ENCODE measurements at regions of chr6 and their contacts with region 1.

Region 1: DNA sequence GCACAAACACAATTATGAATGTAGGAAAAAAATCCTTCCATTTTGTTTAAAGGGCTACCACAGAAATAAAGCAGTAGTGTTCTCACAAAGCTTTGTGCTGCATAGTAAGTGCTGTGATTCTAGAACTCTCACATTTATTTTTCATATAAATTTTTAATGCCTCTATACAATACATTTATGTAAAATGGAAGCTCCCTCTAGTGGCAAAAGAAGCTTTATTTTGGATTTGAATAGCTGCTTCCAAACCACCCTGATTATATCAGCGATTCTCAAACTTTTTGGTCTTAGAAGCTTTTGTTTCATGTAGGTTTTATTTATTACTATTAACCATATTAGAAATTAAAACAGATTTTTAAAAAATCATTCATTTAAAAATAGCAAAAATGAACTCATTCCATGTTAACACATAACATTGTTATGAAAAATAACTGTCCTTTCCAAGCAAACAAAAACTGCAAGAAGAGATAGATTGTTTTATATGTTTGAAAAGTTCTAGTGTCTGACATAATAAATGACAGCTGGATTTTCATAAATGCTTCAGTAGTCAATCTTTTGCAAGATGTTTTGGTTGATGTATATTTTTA is 38.4 kb downstream of the HS3ST5 start:
- DNase-seq: no peak
- H3K4me3 ChIP-seq: no peak overlapping the region
- H3K27ac ChIP-seq: no peak overlapping the region
- H3K4me1 ChIP-seq: no peaks in the 10 kb centered on the region
- H3K27me3 ChIP-seq: peaks cover 0 to 1% (median 0%) of the 10 kb centered on the region in 4 experiments; a peak in 1 of 7 replicates
- CTCF ChIP-seq: peak in 1 of 3 experiments; percentile 18; a peak in 2 of 4 replicates
- EP300 ChIP-seq: no peak
- POLR2A ChIP-seq: no peak
- RAD21 ChIP-seq: peak; percentile 7 to 13; a peak in 1 of 4 replicates

Region 2: DNA sequence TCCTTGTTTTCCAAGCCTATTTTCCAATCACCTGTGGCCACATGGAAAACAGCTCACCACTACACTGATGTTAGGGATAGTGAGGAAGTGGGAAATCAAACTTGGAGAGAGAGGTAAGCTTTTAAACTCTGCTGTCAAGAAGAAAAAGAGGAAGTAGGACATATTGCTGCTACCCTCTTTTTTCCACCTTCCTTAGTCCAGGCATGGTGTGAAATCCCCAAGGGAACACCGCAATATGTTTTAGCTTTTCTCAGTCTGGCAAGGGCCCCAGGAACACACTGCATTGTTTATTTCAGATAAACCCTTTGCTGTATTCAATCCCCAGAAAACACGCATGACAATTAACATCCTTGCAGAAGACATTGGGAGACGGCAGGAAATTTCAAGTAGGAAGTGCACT is 22.9 kb before region 1 on chr6:
- CTCF ChIA-PET with region 1: interaction called, 15 read pairs
- POLR2A ChIA-PET with region 1: interaction called, 3 read pairs
- DNase-seq: no peak
- H3K4me3 ChIP-seq: peak overlapping the region in 1 of 4 experiments; percentile 34; a peak in 1 of 8 replicates
- H3K27ac ChIP-seq: no peak overlapping the region
- H3K4me1 ChIP-seq: peaks cover 0 to 27% (median 15%) of the 10 kb centered on the region in 4 experiments; a peak in 4 of 7 replicates
- H3K27me3 ChIP-seq: no peaks in the 10 kb centered on the region
- CTCF ChIP-seq: no peak
- EP300 ChIP-seq: no peak
- POLR2A ChIP-seq: no peak
- RAD21 ChIP-seq: no peak

Region 3: DNA sequence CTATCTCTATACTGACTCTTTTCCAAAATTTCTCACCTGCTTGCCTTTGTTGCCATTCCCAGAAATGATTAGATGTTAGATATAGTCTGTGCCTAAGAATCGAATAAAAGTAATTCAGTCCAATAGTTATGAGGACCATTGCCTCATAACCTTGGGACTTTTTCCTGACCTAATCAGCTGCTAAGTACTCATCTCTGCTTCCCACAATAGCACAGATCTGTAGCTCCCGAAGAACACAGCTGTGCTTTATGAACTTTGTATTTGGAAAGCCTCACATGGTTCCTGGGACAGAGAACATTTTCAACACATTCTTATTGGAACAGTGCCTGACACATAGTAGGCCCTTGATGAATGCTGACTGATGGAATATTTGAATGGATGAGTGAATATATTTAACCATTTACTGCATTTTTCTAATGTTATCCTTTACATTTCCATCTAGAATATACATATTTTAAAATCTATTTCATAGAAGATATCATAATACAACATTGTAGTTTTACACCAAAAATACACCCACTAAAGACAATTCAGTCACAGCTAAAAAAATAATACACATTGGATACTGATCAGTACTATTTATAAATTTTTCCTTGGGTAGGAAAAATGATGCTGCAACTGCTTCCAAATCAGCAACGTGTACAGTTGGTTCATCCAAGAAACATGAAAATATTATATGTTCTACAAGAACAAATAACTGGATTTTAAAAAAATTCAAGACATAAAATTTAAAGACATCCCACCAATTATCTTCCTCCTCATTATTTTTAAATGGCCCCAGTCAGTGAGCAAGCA is 15.5 kb before region 1 on chr6:
- CTCF ChIA-PET with region 1: interaction called, 37 read pairs
- POLR2A ChIA-PET with region 1: no interaction called
- DNase-seq: no peak
- H3K4me3 ChIP-seq: no peak overlapping the region
- H3K27ac ChIP-seq: no peak overlapping the region
- H3K4me1 ChIP-seq: 0 out of 7 replicates have a peak, but pooled peaks cover 0 to 3% (median 0%) of the 10 kb centered on the region in 4 experiments
- H3K27me3 ChIP-seq: no peaks in the 10 kb centered on the region
- CTCF ChIP-seq: no peak
- EP300 ChIP-seq: no peak
- POLR2A ChIP-seq: no peak
- RAD21 ChIP-seq: no peak

Region 4: GRCh38 chr6:114354482-114354881 is 50.1 kb after region 1 on chr6:
- CTCF ChIA-PET with region 1: no interaction called
- POLR2A ChIA-PET with region 1: no interaction called
- DNase-seq: no peak
- H3K4me3 ChIP-seq: no peak overlapping the region
- H3K27ac ChIP-seq: no peak overlapping the region
- H3K4me1 ChIP-seq: no peaks in the 10 kb centered on the region
- H3K27me3 ChIP-seq: no peaks in the 10 kb centered on the region
- CTCF ChIP-seq: no peak
- EP300 ChIP-seq: no peak
- POLR2A ChIP-seq: no peak
- RAD21 ChIP-seq: no peak